ENCODE measurements at regions of chr19 and their contacts with region 1.

Region 1: DNA sequence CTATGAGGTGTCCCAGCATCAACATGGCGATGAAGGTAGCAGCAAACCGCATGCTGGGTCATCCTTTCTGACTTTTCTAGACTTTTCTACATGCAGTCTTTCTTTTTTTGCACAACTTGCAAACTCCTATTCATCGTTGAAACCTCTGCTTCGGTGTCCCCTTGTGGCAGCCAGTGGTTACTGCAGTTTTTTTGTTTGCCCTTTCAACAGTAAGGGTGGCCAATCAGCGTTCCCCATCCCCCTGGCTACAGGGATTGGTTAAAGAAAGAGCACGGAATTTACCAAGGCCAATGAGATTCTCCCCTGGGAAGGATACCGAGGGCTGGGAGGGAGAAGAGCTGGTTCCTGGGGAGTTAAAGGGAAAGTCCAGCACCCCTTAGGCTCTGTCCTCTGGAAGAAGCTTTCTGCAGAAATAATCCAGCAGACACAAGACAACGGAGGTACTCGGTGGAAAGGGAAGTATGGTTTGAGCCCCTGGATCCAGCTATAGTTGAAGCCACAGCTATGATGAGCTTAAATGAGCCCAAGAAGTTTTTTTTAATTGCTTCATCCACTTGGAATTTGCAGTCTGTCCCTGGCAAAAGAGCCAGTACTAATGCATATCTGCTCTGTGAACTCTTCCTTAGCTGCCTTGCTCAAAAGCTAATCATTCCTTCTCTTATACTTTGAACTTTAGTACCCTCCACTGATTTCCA is 5.6 kb upstream of the LSM4 start:
- DNase-seq: peak; percentile 93

Region 2: GRCh38 chr19:18310118-18310909 is 18.2 kb before region 1 on chr19:
- CTCF ChIA-PET with region 1: no interaction called
- POLR2A ChIA-PET with region 1: no interaction called
- DNase-seq: no peak

Region 3: GRCh38 chr19:18340190-18340989 is 11.9 kb after region 1 on chr19 and contains the start of gene PGPEP1:
- CTCF ChIA-PET with region 1: interaction called, 21 read pairs
- POLR2A ChIA-PET with region 1: interaction called, 5 read pairs
- DNase-seq: peak; percentile 91

Measured in HEK293T (cell line).